ENCODE measurements at regions of chr1 and their contacts with region 1.

Region 1: DNA sequence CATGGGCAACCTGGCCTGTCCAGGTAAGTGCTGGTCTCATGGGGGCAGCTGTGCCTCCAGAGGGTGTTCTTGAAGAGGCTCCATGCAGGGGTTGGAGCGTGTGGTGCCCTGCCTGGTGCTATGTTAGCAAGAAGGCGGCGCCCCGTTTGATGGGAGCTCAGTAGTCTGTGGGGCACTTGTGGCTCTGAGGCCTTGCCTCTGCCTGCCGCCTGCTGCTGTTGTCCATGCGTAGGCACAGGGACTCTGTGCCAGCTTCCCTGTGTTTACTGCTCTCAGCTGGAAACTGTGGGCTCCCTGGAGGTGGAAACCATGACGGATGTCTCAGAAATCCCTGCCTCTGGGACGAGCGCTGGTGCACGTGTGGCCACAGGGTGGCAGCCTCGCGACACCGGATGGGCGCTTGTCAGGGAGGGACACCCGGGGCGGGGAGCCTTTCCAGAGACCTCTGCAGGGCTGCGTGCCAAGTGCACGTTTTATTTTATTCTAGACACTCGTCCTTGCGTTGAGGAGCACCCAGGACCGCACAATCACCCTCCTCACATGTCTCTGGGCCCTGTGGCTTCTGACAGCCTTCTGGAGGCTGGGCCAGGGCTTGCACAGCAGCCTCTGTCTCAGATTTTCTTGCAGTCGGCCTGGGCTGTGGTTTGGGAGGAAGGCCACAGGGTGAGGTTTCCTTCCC is 27.1 kb downstream of the SNAP47 start:
- DNase-seq: peak; percentile 92
- ATAC-seq: peak; percentile 74
- H3K4me3 Mint-ChIP-seq: no peak overlapping the region
- H3K27ac Mint-ChIP-seq: peak overlapping the region; percentile 21
- H3K4me1 Mint-ChIP-seq: peaks cover 80% of the 10 kb centered on the region
- H3K27me3 Mint-ChIP-seq: no peaks in the 10 kb centered on the region
- CTCF ChIP-seq: peak; percentile 83

Region 2: GRCh38 chr1:227586733-227587132 is 175.6 kb before region 1 on chr1:
- CTCF ChIA-PET with region 1: no interaction called
- POLR2A ChIA-PET with region 1: no interaction called
- intact Hi-C with region 1: no loop called
- DNase-seq: no peak
- ATAC-seq: no peak
- H3K4me3 Mint-ChIP-seq: no peak overlapping the region
- H3K27ac Mint-ChIP-seq: no peak overlapping the region
- H3K4me1 Mint-ChIP-seq: no peaks in the 10 kb centered on the region
- H3K27me3 Mint-ChIP-seq: no peaks in the 10 kb centered on the region
- CTCF ChIP-seq: no peak

Region 3: GRCh38 chr1:227712648-227713047 is 49.7 kb before region 1 on chr1:
- CTCF ChIA-PET with region 1: no interaction called
- POLR2A ChIA-PET with region 1: no interaction called
- intact Hi-C with region 1: no loop called
- DNase-seq: no peak
- ATAC-seq: no peak
- H3K4me3 Mint-ChIP-seq: no peak overlapping the region
- H3K27ac Mint-ChIP-seq: no peak overlapping the region
- H3K4me1 Mint-ChIP-seq: peaks cover 6% of the 10 kb centered on the region
- H3K27me3 Mint-ChIP-seq: peaks cover 2% of the 10 kb centered on the region
- CTCF ChIP-seq: no peak

Region 4: GRCh38 chr1:227774821-227775661 is 12.7 kb after region 1 on chr1:
- CTCF ChIA-PET with region 1: interaction called, 15 read pairs
- POLR2A ChIA-PET with region 1: interaction called, 3 read pairs
- intact Hi-C with region 1: no loop called
- DNase-seq: no peak
- ATAC-seq: no peak
- H3K4me3 Mint-ChIP-seq: no peak overlapping the region
- H3K27ac Mint-ChIP-seq: no peak overlapping the region
- H3K4me1 Mint-ChIP-seq: peaks cover 25% of the 10 kb centered on the region
- H3K27me3 Mint-ChIP-seq: no peaks in the 10 kb centered on the region
- CTCF ChIP-seq: no peak

Region 5: DNA sequence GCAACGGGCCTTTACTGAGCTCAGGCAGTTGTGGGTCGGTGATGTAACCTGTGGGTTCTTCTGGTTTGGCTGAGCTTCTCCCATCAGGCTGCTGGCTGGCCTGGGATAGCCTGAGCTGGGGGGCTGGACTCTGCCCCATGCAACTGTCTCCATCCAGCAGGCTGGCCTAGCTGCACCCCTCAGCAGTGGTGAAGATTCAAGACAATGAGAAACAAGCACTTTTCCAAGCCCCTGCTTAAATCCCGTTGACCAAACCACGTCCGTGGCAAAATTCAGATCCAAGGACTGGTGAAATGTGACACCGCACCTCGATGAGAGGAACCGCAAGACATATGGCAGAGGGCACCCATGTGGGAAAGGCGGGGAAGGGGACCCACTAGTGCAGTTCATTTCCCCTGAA is 78.7 kb after region 1 on chr1:
- CTCF ChIA-PET with region 1: no interaction called
- POLR2A ChIA-PET with region 1: no interaction called
- intact Hi-C with region 1: no loop called
- DNase-seq: no peak
- ATAC-seq: no peak
- H3K4me3 Mint-ChIP-seq: no peak overlapping the region
- H3K27ac Mint-ChIP-seq: no peak overlapping the region
- H3K4me1 Mint-ChIP-seq: no peaks in the 10 kb centered on the region
- H3K27me3 Mint-ChIP-seq: peaks cover 1% of the 10 kb centered on the region
- CTCF ChIP-seq: no peak

Region 6: DNA sequence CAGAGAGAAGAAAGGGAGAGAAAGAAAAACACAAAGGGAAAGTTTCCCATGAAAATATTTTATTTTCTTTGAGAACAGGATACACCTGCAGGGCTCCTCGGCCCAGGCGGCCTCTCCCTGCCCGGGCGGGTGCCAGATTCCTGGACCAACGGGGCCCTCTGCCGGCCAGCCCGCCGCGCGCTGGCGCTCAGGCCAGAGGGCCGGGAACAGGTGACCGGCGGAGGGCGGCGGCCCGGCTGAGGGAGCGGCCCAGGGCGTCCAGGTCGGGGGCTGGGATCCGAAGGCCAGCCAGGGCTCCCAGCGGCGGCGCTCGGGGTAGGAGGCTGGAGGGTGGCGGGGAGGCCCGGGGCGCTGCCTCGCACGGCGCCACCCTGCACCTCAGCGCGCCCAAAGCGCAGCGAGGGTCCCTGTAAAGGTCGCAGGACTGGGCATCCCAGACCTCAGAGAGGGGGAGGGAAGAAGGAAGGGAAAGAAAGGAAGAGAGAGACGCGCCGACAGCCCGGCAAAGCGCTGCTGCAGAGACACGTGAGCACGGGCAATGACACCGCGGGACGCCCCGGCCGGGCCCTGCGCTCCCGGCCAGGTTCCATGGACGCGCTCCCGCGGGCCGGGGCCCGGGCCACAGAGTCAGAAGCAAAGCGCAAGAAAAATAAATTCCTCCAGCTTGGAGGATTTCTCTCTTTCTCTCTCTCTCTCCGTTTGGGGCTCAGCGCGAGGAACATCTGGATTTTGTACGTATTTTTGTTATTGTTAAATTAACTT is 184.4 kb after region 1 on chr1:
- CTCF ChIA-PET with region 1: interaction called, 59 read pairs
- POLR2A ChIA-PET with region 1: interaction called, 5 read pairs
- intact Hi-C with region 1: loop called (anchors 10 kb)
- DNase-seq: peak; percentile 62
- ATAC-seq: peak; percentile 81
- H3K4me3 Mint-ChIP-seq: peak overlapping the region; percentile 44
- H3K27ac Mint-ChIP-seq: no peak overlapping the region
- H3K4me1 Mint-ChIP-seq: peaks cover 2% of the 10 kb centered on the region
- H3K27me3 Mint-ChIP-seq: peaks cover 18% of the 10 kb centered on the region
- CTCF ChIP-seq: peak; percentile 76

Measured in activated CD8-positive, alpha-beta T cell treated with anti-CD3 and anti-CD28 coated beads for 36 hours (primary cell).